Endothelial cell of umbilical vein (primary cell): ENCODE measurements at regions of chr14 and their contacts with region 1.

Region 1: GRCh38 chr14:90399541-90400444 is 3.0 kb downstream of the CALM1 start:
- DNase-seq: peak; percentile 95
- H3K4me3 ChIP-seq: peak overlapping the region in 1 of 3 experiments; percentile 78
- H3K27ac ChIP-seq: peak overlapping the region; percentile 33
- H3K4me1 ChIP-seq: peaks cover 35% of the 10 kb centered on the region
- H3K27me3 ChIP-seq: no peaks in the 10 kb centered on the region
- CTCF ChIP-seq: peak; percentile 100
- POLR2A ChIP-seq: no peak

Region 2: DNA sequence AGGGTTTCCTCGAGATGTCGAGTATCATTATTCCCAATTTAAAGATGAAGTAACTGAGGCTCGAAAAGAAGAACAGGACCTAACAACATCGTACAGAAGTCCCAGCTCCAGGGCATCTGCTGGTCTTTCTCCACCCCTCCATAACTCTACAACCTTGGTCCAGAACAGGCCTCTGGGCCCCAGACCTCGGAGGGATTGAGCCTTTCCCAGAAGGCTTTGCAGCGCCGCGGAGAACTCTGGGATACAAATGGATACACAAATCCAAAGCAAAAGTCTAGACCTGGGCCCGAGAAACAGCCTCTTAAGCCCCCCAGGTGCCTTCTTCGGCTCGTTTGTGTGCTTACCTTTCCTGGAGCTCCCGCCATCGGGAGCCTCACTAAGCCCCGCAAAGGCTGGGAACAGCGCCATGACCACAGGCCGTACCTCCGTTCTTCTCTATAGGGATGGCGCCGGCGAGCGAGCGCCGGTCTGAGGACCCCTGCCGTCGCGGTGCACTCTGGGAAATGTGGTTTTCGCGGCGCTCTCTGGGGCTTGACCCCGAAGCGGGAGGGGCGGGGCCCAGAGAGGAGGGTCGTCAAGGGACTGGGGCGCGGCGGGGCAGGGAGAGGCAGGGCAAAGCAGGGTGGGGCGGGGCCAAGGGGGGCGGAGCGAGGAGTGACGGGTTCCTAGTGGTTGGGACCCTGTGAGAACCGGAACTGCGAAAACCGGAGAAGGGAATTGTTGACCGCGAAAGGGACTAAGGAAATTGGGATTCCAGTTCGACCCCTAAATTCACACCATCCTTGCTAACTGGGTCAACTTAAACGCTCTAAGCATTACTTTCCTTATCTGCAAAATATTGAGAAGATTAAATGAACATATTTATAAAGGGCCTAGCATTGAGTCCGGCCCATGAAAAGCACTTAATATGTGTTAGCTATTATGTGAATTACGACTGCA is 68.0 kb before region 1 on chr14 and contains the start of gene NRDE2:
- CTCF ChIA-PET with region 1: no interaction called
- POLR2A ChIA-PET with region 1: no interaction called
- dilution Hi-C with region 1: no loop called
- intact Hi-C with region 1: loop called (anchors 1 kb)
- DNase-seq: peak; percentile 98
- H3K4me3 ChIP-seq: peak within 1 kb of the TSS; percentile 48 to 89 (median 79)
- H3K27ac ChIP-seq: peak within 1 kb of the TSS; percentile 91
- H3K4me1 ChIP-seq: peaks cover 6% of the 10 kb centered on the region
- H3K27me3 ChIP-seq: peaks cover 10% of the 10 kb centered on the region in 2 experiments
- CTCF ChIP-seq: no peak
- POLR2A ChIP-seq: peak; percentile 81
- total RNA-seq, gene NRDE2: 22.1 and 22.5 TPM in 2 replicates

Region 3: DNA sequence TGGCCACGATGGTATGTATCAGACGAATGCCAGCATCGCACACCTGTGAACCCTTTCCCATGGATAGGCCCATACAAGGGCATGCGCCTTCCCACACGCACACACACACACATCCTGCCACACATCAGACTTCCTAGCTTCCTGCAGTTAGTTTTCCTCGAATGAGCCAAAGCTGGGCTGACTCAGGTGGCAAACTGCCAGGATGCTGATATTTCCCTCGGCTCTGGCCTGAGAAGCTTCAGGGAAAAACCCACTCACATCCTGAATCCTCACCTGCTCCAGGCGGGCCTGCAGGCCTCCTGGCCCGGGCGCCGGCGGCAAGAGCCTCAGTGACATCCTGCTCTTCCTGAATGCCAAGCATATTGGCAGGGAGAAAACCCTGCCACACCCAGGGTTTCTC is 19.4 kb after region 1 on chr14:
- CTCF ChIA-PET with region 1: interaction called, 23 read pairs
- POLR2A ChIA-PET with region 1: interaction called, 5 read pairs
- dilution Hi-C with region 1: no loop called
- intact Hi-C with region 1: loop called (anchors 1 kb)
- DNase-seq: peak; percentile 100
- H3K4me3 ChIP-seq: no peak overlapping the region
- H3K27ac ChIP-seq: peak overlapping the region; percentile 75
- H3K4me1 ChIP-seq: peaks cover 32% of the 10 kb centered on the region
- H3K27me3 ChIP-seq: no peaks in the 10 kb centered on the region
- CTCF ChIP-seq: no peak
- POLR2A ChIP-seq: no peak

Region 4: GRCh38 chr14:90461425-90461824 is 61.6 kb after region 1 on chr14:
- CTCF ChIA-PET with region 1: interaction called, 13 read pairs
- POLR2A ChIA-PET with region 1: interaction called, 4 read pairs
- dilution Hi-C with region 1: no loop called
- intact Hi-C with region 1: no loop called
- DNase-seq: no peak
- H3K4me3 ChIP-seq: no peak overlapping the region
- H3K27ac ChIP-seq: no peak overlapping the region
- H3K4me1 ChIP-seq: no peaks in the 10 kb centered on the region
- H3K27me3 ChIP-seq: peaks cover 0 to 18% of the 10 kb centered on the region in 2 experiments
- CTCF ChIP-seq: no peak
- POLR2A ChIP-seq: no peak

Region 5: DNA sequence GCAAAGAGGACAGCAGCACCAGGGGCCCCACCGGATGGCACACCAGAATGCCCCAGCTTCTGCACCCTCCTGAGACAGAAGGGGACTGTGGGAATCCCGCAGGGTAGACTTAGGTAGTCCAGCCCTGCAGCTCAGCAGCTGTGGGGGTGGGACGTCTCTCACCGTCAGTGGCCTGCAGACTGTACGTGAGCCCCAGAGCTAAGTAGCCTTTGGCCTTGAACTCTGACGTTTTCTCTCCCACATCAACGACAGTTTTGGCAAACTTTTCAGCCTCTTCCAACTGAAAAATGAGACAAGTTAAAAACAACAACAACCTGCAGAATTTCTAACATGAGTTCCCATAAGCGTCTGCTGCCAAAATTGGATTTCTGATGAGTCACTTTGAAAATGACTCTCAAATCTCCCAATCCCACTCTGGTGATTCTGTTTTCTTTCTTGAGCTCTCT is 255.1 kb after region 1 on chr14:
- CTCF ChIA-PET with region 1: no interaction called
- POLR2A ChIA-PET with region 1: no interaction called
- dilution Hi-C with region 1: no loop called
- intact Hi-C with region 1: no loop called
- DNase-seq: no peak
- H3K4me3 ChIP-seq: no peak overlapping the region
- H3K27ac ChIP-seq: no peak overlapping the region
- H3K4me1 ChIP-seq: no peaks in the 10 kb centered on the region
- H3K27me3 ChIP-seq: no peaks in the 10 kb centered on the region
- CTCF ChIP-seq: no peak
- POLR2A ChIP-seq: no peak

Region 6: GRCh38 chr14:90677484-90678050 is 277.8 kb after region 1 on chr14:
- CTCF ChIA-PET with region 1: interaction called, 4 read pairs
- POLR2A ChIA-PET with region 1: interaction called, 4 read pairs
- dilution Hi-C with region 1: no loop called
- intact Hi-C with region 1: loop called (anchors 5 kb)
- DNase-seq: peak; percentile 75
- H3K4me3 ChIP-seq: no peak overlapping the region
- H3K27ac ChIP-seq: peak overlapping the region; percentile 53
- H3K4me1 ChIP-seq: peaks cover 19% of the 10 kb centered on the region
- H3K27me3 ChIP-seq: no peaks in the 10 kb centered on the region
- CTCF ChIP-seq: no peak
- POLR2A ChIP-seq: no peak